ENCODE measurements at regions of chr16 and their contacts with region 1.

Region 1: DNA sequence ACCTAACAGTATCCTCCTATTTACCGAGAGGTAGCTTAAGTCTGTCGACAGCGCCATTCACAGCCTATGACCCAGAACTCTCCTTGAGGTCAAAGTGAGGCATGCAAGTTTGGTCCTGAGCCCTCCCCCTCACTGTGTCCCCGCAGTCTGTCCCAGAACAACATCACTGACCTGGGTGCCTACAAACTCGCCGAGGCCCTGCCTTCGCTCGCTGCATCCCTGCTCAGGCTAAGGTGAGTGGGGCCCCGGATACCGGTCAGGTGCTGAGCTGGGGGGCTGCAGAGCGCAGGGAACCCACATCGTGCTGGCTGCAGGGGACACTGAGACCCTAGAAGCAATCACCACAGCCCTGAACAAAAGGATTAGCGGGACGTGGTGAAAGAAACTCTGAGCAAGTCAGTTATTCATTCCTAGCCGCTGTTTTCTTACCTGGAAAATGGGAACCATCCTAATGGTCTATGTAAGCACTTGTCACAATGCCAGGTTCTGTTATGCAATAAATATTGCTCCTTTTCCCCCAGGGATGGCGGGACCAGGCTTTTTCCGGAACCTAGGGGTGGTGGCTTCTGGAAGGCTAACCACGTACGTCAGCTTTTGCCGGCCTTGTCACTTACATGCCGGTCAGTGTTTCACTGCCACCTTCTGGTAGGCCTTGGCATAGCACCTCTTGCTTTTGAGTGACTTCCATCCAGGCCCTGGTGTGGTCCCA is 23.8 kb downstream of the DEXI start:
- DNase-seq: peak; percentile 86 to 96 (median 90)
- H3K4me3 ChIP-seq: no peak overlapping the region
- H3K27ac ChIP-seq: no peak overlapping the region
- H3K4me1 ChIP-seq: peaks cover 8% of the 10 kb centered on the region
- H3K27me3 ChIP-seq: no peaks in the 10 kb centered on the region
- CTCF ChIP-seq: peak; percentile 84 to 87 (median 86)
- EP300 ChIP-seq: peak; percentile 54
- POLR2A ChIP-seq: no peak

Region 2: DNA sequence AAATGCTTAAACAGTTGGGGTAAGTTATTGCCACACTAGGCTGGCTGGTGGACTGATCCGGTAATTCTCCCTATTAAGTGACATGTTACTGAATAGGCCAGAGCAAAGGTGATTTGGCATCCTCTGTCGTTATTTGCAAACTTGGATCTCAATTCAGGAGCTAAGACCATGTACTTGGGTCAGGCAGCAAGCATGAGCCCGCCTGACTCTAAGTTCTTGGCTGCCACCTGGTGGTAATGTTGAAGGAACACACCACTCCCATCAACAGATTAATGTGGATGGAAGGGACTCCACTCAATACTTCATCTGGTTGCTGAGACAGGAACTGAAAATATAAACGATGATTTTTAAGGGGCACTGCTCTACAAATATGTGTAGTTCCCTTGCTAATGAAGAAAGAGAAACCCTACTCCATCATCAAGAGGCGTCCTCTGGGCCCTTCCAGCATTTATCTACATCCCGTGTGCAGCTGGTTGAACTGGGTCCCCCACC is 408.9 kb before region 1 on chr16:
- intact Hi-C with region 1: loop called in 3 of 4 experiments (anchors 5 to 10 kb)
- DNase-seq: peak in 4 of 5 donors; percentile 49 to 60 (median 54)
- H3K4me3 ChIP-seq: no peak overlapping the region
- H3K27ac ChIP-seq: no peak overlapping the region
- H3K4me1 ChIP-seq: no peaks in the 10 kb centered on the region
- H3K27me3 ChIP-seq: no peaks in the 10 kb centered on the region
- CTCF ChIP-seq: peak; percentile 64 to 76 (median 65)
- EP300 ChIP-seq: no peak
- POLR2A ChIP-seq: no peak

Region 3: GRCh38 chr16:10743610-10744393 is 174.6 kb before region 1 on chr16 and contains the start of gene NUBP1:
- intact Hi-C with region 1: loop called in 2 of 4 experiments (anchors 5 to 10 kb)
- DNase-seq: peak; percentile 97 to 100 (median 100)
- H3K4me3 ChIP-seq: peak within 1 kb of the TSS; percentile 63
- H3K27ac ChIP-seq: peak within 1 kb of the TSS; percentile 95 to 98
- H3K4me1 ChIP-seq: no peaks in the 10 kb centered on the region
- H3K27me3 ChIP-seq: no peaks in the 10 kb centered on the region
- CTCF ChIP-seq: peak in 1 of 3 donors; percentile 53
- EP300 ChIP-seq: peak; percentile 74
- POLR2A ChIP-seq: peak; percentile 73
- total RNA-seq, gene NUBP1: 15.1 to 37.4 (median 31.2) TPM

Region 4: DNA sequence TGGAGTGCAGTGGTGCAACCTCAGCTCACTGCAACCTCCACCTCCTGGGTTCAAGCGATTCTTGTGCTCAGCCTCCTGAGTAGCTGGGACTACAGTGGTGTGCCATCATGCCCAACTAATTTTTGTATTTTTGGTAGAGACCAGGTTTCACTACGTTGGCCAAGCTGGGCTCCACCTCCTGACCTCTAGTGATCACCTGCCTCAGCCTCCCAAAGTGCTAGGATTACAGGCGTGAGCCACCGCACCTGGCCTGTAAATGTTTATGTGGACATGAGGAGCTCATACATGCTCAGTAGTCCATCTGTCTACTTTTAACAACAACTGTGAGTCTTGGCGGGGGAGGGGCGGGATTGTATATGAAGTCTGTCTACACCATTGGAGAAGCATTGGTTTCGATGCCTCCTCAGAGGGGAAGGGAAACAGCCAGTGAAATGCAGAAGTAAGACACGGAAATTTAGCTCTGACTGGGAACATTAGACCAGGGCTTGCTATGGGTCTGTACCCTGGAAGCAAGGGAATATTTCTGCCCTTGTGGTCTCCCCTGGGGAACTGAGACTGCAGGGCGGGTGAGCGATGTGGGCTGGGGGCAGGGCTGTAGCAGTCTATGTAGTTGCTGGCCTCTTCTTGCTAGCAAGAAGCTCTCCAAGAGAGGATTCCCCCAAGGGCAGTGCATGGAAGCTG is 165.5 kb before region 1 on chr16:
- intact Hi-C with region 1: loop called in 2 of 4 experiments (anchors 10 kb)
- DNase-seq: peak in 2 of 5 donors; percentile 32 to 33
- H3K4me3 ChIP-seq: no peak overlapping the region
- H3K27ac ChIP-seq: no peak overlapping the region
- H3K4me1 ChIP-seq: no peaks in the 10 kb centered on the region
- H3K27me3 ChIP-seq: no peaks in the 10 kb centered on the region
- CTCF ChIP-seq: no peak
- EP300 ChIP-seq: no peak
- POLR2A ChIP-seq: no peak

Region 5: DNA sequence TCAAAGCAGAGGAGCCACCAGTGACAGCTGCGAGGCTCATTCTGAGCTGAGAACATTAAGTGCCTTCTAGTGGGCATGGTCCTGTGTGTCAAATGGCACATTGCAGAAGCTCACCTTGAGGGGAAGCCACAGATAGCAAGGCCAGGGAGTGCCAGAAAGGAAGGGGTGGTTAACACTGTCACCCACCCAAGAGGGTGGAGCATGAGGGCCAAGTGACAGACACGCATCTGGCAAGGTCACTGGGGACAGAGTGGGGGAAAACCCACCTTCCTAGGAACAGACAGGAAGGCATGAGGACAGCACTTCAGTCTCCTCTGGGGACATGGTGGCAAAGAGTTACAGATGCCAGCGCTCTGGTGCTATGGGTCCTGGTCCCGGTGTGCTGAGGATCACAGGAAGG is 152.7 kb before region 1 on chr16:
- intact Hi-C with region 1: loop called in 2 of 4 experiments (anchors 10 kb)
- DNase-seq: no peak
- H3K4me3 ChIP-seq: no peak overlapping the region
- H3K27ac ChIP-seq: no peak overlapping the region
- H3K4me1 ChIP-seq: no peaks in the 10 kb centered on the region
- H3K27me3 ChIP-seq: no peaks in the 10 kb centered on the region
- CTCF ChIP-seq: no peak
- EP300 ChIP-seq: no peak
- POLR2A ChIP-seq: no peak

Measured in ovary (tissue), 10 donors.